Naive thymus-derived CD8-positive, alpha-beta T cell (primary cell): ENCODE measurements at regions of chr14 and their contacts with region 1.

Region 1: GRCh38 chr14:69153131-69153872 is 383 bp upstream of the DCAF5 start:
- DNase-seq: peak; percentile 84 to 97 (median 91)
- ATAC-seq: peak; percentile 91
- H3K4me3 Mint-ChIP-seq: peak overlapping the region; percentile 93 to 99 (median 98)
- H3K27ac Mint-ChIP-seq: peak overlapping the region; percentile 87 to 97 (median 92)
- H3K4me1 Mint-ChIP-seq: peaks cover 22 to 37% (median 35%) of the 10 kb centered on the region in 4 donors
- H3K27me3 Mint-ChIP-seq: no peaks in the 10 kb centered on the region

Region 2: DNA sequence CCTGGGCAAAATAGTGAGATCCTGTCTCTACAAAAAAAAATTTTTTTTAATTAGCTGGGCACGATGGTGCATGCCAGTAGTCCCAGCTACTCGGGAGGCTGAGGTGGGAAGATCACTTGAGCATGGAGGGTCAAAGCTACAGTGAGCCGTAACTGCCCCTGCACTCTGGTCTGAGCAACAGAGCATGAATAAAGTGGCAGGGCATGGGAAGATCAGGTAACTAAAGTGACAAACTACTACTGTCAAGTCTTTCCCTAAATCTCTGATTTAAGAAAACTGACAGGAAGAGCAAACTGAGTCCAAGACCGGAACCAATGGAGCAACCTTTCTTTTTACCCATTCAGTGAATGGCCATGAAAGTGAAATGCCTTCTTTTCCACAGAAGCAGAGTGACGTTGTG is 11.2 kb before region 1 on chr14:
- POLR2A ChIA-PET with region 1: interaction called, 24 read pairs
- DNase-seq: no peak
- ATAC-seq: no peak
- H3K4me3 Mint-ChIP-seq: peak overlapping the region in 1 of 10 donors; percentile 30
- H3K27ac Mint-ChIP-seq: peak overlapping the region in 3 of 10 donors; percentile 18 to 43 (median 35)
- H3K4me1 Mint-ChIP-seq: peaks cover 29 to 79% (median 69%) of the 10 kb centered on the region in 4 donors
- H3K27me3 Mint-ChIP-seq: no peaks in the 10 kb centered on the region

Region 3: GRCh38 chr14:69181491-69181890 is 28.2 kb after region 1 on chr14:
- POLR2A ChIA-PET with region 1: no interaction called
- DNase-seq: no peak
- ATAC-seq: no peak
- H3K4me3 Mint-ChIP-seq: no peak overlapping the region
- H3K27ac Mint-ChIP-seq: peak overlapping the region in 1 of 10 donors; percentile 30
- H3K4me1 Mint-ChIP-seq: no peaks in the 10 kb centered on the region
- H3K27me3 Mint-ChIP-seq: peaks cover 0 to 3% (median 0%) of the 10 kb centered on the region in 5 donors

Region 4: GRCh38 chr14:69191340-69192111 is 38.2 kb after region 1 on chr14 and contains the start of gene EXD2:
- POLR2A ChIA-PET with region 1: interaction called, 26 read pairs
- DNase-seq: peak; percentile 44 to 84 (median 64)
- ATAC-seq: peak; percentile 82 to 84
- H3K4me3 Mint-ChIP-seq: peak within 1 kb of the TSS; percentile 88 to 97 (median 93)
- H3K27ac Mint-ChIP-seq: peak within 1 kb of the TSS; percentile 79 to 97 (median 94)
- H3K4me1 Mint-ChIP-seq: peaks cover 11 to 32% (median 30%) of the 10 kb centered on the region in 4 donors
- H3K27me3 Mint-ChIP-seq: peaks cover 0 to 2% (median 0%) of the 10 kb centered on the region in 5 donors
- polyA plus RNA-seq, gene EXD2: 5.8 to 11.1 (median 8.2) TPM